ENCODE measurements at regions of chr10 and their contacts with region 1.

Region 1: GRCh38 chr10:68331455-68332258 is at the start of gene HNRNPH3:
- DNase-seq: peak; percentile 99
- total RNA-seq, gene HNRNPH3: 110 TPM

Region 2: DNA sequence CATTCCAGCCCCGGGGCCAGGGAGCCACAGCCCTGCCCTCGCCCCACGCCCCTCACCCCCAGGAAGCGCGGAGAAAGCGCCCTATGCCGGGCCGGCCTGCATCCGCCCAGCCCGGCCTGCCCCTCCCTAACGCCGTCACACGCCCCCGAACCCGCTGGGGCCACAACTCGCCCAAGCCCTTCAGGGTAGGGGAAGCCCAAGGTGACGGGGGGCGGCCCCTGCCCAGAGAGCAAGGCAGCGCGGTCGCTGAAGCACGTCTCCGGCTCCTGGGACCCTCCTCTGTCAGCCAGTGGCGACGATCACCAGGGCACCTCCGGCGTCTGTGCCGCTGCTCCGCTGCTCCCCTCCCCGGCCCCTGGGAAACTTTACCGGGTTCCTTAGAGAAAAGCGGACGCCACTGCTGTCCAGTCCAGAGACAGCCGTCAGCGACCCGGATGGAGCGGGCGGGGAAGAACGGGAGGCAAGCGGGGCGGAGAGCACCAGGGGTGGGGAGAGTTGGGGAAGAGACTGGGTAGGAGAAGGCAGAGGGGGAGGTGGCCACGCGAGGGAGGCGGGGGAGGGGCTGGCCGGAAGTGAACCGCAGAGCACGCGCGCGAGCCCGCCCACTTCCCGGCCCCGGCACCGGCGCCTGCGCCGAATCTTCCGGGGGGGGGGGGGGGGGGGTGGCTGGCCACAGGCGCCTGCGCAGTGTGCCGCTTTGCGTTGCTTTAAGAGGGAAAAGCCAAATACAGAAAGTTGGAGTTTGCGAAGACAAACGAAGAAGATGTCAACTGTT is 256.7 kb before region 1 on chr10 and contains the start of gene HERC4:
- intact Hi-C with region 1: loop called (anchors 10 kb)
- DNase-seq: peak; percentile 98
- total RNA-seq, gene HERC4: 43.0 TPM